ENCODE measurements at regions of chr4 and their contacts with region 1.

Region 1: GRCh38 chr4:179927473-179927872 is 2315.7 kb upstream of the TENM3 start:
- DNase-seq: no peak
- ATAC-seq: no peak

Region 2: GRCh38 chr4:178672512-178672911 is 1255.0 kb before region 1 on chr4:
- intact Hi-C with region 1: loop called (anchors 10 kb)
- DNase-seq: no peak
- ATAC-seq: no peak

Region 3: DNA sequence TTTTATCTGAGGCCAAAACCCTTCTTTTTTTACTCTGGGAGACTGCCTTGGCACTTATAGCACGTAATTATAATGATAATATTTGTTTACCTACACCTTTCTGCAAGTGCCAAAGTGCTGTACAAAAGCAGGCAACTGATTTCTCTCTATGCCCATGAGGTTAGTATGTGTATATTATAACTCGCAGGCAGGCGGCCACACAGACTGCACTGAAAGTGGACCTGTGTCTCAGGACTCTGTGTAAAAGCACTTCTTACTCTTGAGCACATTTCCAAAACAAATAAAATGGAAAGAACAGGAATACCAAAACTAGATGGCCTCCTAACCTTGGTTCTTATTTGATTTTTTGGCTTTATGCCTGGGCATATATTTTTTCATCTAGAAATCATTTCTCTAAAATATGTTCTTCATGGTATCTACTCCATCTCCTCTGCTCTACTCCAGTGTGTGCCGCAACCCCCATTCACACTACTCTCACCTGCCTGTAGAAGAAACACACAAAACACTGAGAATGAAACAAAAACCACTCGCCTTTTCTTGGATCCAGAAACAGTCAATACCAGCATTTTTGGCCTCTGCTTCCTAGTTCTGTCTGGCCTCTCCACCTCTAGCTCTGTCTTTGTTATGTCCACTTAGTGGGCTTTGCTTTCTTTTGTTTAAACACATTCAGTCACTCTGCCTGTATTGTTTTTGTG is 1381.2 kb after region 1 on chr4:
- intact Hi-C with region 1: no loop called
- DNase-seq: no peak
- ATAC-seq: no peak